ENCODE measurements at regions of chr1 and their contacts with region 1.

Region 1: DNA sequence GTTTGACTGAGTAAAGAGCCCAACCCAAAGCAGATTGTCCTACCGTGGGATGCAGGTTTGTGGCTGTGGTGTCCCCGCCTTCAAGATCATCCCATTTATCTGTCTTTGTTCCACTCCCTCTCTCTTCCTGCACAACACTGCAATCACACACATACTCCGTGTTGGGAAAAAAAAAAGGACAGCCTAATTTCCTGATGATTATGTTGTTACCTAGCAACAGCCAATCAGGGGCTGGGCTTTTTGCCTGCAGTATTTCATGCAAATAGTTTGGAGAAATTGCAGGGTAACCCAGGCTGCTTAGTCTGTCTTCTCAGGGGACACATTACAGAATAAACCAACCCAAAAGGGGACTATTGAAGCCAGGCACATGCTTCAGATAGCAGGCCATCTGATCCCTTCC is 38.3 kb downstream of the PHC2 start:
- DNase-seq: no peak
- H3K4me3 ChIP-seq: no peak overlapping the region
- H3K27ac ChIP-seq: peak overlapping the region in 2 of 4 donors; percentile 59 to 72
- H3K4me1 ChIP-seq: peaks cover 0 to 61% (median 48%) of the 10 kb centered on the region in 4 donors
- H3K27me3 ChIP-seq: no peaks in the 10 kb centered on the region
- CTCF ChIP-seq: no peak
- EP300 ChIP-seq: no peak
- POLR2A ChIP-seq: no peak

Region 2: DNA sequence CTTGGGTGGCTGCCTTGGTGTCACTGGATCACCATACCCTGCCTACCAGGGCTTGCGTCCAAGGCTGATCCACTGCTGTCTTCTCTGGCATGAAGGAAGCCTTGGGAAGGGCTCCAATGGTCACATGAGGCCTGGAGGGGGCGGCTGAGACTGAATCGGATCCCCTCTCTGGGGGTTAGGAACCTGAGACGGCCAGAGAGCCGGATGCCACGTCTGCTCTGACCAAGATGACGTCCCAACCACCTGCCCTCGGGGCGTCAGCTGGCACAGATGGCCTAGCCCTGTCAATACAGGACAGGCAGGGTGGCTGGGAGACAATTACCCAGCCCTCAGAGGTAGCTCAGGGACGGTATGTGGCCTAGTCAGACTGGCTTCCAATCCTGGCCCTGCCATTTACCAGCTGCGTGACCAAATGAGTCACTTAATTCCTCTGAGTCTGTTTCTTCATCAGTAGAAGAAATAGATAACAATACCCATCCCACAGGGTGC is 216.2 kb before region 1 on chr1:
- intact Hi-C with region 1: no loop called
- DNase-seq: no peak
- H3K4me3 ChIP-seq: no peak overlapping the region
- H3K27ac ChIP-seq: no peak overlapping the region
- H3K4me1 ChIP-seq: peaks cover 0 to 17% (median 11%) of the 10 kb centered on the region in 4 donors
- H3K27me3 ChIP-seq: no peaks in the 10 kb centered on the region
- CTCF ChIP-seq: no peak
- EP300 ChIP-seq: no peak
- POLR2A ChIP-seq: no peak

Region 3: GRCh38 chr1:33430692-33431593 is 38.3 kb after region 1 on chr1 and contains the start of gene PHC2:
- intact Hi-C with region 1: loop called (anchors 5 kb)
- DNase-seq: peak; percentile 98
- H3K4me3 ChIP-seq: peak within 1 kb of the TSS; percentile 48 to 94 (median 84)
- H3K27ac ChIP-seq: peak within 1 kb of the TSS; percentile 71 to 87 (median 87)
- H3K4me1 ChIP-seq: peaks cover 0 to 55% (median 47%) of the 10 kb centered on the region in 4 donors
- H3K27me3 ChIP-seq: no peaks in the 10 kb centered on the region
- CTCF ChIP-seq: peak in 2 of 4 experiments; percentile 16 to 24
- EP300 ChIP-seq: no peak
- POLR2A ChIP-seq: no peak
- total RNA-seq, gene PHC2: 96.3 to 199 (median 124) TPM